Activated T-helper 1 cell treated with anti-CD3 and anti-CD28 coated beads, Interleukin-12 subunit alpha, Interleukin-12 subunit beta, Interleukin-2, Interleukin-4 antibody, amounts not matched to agents 30 ng/mL and 10 ng/mL and 1 ng/mL, durations not matched to agents 14 hours and 24 hours and 36 hours (primary cell): ENCODE measurements at regions of chr17 and their contacts with region 1.

Region 1: GRCh38 chr17:58317421-58318064 is 11.1 kb downstream of the TSPOAP1 start:
- DNase-seq: peak; percentile 55
- H3K4me3 Mint-ChIP-seq: no peak overlapping the region
- H3K27ac Mint-ChIP-seq: peak overlapping the region; percentile 87
- H3K4me1 Mint-ChIP-seq: peaks cover 28% of the 10 kb centered on the region
- H3K27me3 Mint-ChIP-seq: no peaks in the 10 kb centered on the region

Region 2: GRCh38 chr17:58329035-58329809 is 11.7 kb after region 1 on chr17:
- intact Hi-C with region 1: loop called (anchors 1 kb)
- DNase-seq: peak; percentile 81
- H3K4me3 Mint-ChIP-seq: peak overlapping the region; percentile 100
- H3K27ac Mint-ChIP-seq: peak overlapping the region; percentile 93
- H3K4me1 Mint-ChIP-seq: peaks cover 45% of the 10 kb centered on the region
- H3K27me3 Mint-ChIP-seq: peaks cover 2% of the 10 kb centered on the region